ENCODE measurements at regions of chr14 and their contacts with region 1.

Region 1: GRCh38 chr14:94474581-94475031 is 1.4 kb downstream of the SERPINA9 start:
- DNase-seq: no peak
- H3K4me3 ChIP-seq: no peak overlapping the region
- H3K27ac ChIP-seq: no peak overlapping the region
- H3K4me1 ChIP-seq: no peaks in the 10 kb centered on the region
- H3K27me3 ChIP-seq: no peaks in the 10 kb centered on the region
- CTCF ChIP-seq: no peak
- EP300 ChIP-seq: no peak
- POLR2A ChIP-seq: no peak

Region 2: GRCh38 chr14:94392510-94392935 is 82.1 kb before region 1 on chr14:
- intact Hi-C with region 1: loop called in 1 of 4 experiments (anchors 5 kb)
- DNase-seq: no peak
- H3K4me3 ChIP-seq: no peak overlapping the region
- H3K27ac ChIP-seq: no peak overlapping the region
- H3K4me1 ChIP-seq: no peaks in the 10 kb centered on the region
- H3K27me3 ChIP-seq: no peaks in the 10 kb centered on the region
- CTCF ChIP-seq: no peak
- EP300 ChIP-seq: no peak
- POLR2A ChIP-seq: no peak